ENCODE measurements at regions of chr9 and their contacts with region 1.

Region 1: GRCh38 chr9:120464176-120464886 is 115.6 kb downstream of the CDK5RAP2 start:
- DNase-seq: no peak
- H3K4me3 ChIP-seq: no peak overlapping the region
- H3K4me3 Mint-ChIP-seq: no peak overlapping the region
- H3K27ac ChIP-seq: no peak overlapping the region
- H3K27ac Mint-ChIP-seq: peak overlapping the region in 4 of 7 donors; percentile 3 to 44 (median 28)
- H3K4me1 ChIP-seq: no peaks in the 10 kb centered on the region
- H3K4me1 Mint-ChIP-seq: peaks cover 15% of the 10 kb centered on the region
- H3K27me3 ChIP-seq: no peaks in the 10 kb centered on the region
- H3K27me3 Mint-ChIP-seq: peaks cover 0 to 2% (median 0%) of the 10 kb centered on the region in 3 donors
- CTCF ChIP-seq: no peak

Region 2: GRCh38 chr9:119968836-119969707 is 495.3 kb before region 1 on chr9:
- intact Hi-C with region 1: loop called in 1 of 2 experiments (anchors 10 kb)
- DNase-seq: peak; percentile 16 to 41 (median 37)
- H3K4me3 ChIP-seq: peak overlapping the region in 1 of 3 experiments; percentile 41
- H3K4me3 Mint-ChIP-seq: peak overlapping the region; percentile 67 to 81
- H3K27ac ChIP-seq: no peak overlapping the region
- H3K27ac Mint-ChIP-seq: peak overlapping the region in 1 of 7 donors; percentile 55
- H3K4me1 ChIP-seq: peaks cover 0 to 8% of the 10 kb centered on the region in 2 donors
- H3K4me1 Mint-ChIP-seq: peaks cover 4% of the 10 kb centered on the region
- H3K27me3 ChIP-seq: no peaks in the 10 kb centered on the region
- H3K27me3 Mint-ChIP-seq: peaks cover 2 to 7% (median 3%) of the 10 kb centered on the region in 3 donors
- CTCF ChIP-seq: peak; percentile 93

Measured in CD14-positive monocyte (primary cell).